Tibial artery (tissue), 4 donors: ENCODE measurements at regions of chr6 and their contacts with region 1.

Region 1: DNA sequence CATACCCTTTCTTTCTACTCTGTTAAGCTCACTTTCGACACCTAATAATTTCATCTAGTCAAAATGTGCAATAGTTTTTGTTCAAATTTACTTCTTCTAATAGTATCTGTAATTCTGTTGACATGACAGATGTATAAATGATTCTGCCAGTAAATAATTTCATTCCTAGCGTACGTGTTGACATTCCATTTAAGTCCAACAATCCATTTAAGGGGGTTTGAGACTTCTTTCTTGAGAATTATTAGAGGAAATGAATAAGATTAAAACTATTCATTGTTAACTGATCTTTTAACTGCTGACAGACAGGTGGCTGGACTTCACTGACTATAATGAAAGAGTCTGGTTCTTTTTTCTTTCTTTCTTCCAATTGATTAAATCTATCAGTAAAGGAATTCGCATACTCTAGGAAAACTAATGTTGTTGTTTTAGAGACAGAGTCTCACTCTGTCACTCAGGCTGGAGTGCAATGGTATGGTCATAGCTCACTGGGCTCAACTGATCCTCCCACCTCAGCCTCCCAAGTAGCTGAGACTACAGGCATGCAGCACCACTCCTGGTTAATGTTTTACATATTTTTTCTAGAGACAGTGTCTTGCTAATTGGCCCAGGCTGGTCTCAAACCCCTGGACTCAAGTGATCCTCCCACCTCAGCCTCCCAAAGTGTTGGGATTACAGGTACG is 55.9 kb downstream of the MAP3K5 start:
- DNase-seq: no peak
- H3K4me3 ChIP-seq: no peak overlapping the region
- H3K27ac ChIP-seq: peak overlapping the region; percentile 55 to 75
- H3K4me1 ChIP-seq: peaks cover 0 to 71% (median 36%) of the 10 kb centered on the region in 4 donors
- H3K27me3 ChIP-seq: no peaks in the 10 kb centered on the region
- CTCF ChIP-seq: no peak

Region 2: DNA sequence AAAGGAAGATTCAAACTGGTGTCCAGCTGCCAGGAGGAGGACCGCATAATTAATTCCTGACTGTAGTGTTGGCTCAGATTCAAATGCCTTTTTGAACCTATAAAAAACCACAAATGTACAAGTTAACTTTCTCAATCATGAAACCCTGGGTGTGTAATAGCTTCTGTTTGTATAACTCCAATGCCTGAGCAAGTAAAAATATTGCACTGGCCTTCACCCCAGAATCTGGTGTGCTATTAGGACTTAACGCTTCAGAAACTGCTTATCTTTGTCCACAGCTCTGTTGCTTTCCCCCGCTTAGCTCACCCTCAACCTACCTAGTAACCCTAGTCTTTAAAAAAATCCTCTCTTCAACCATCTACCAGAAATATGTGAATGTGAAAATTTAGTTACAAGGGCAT is 67.1 kb before region 1 on chr6:
- intact Hi-C with region 1: no loop called
- DNase-seq: no peak
- H3K4me3 ChIP-seq: no peak overlapping the region
- H3K27ac ChIP-seq: no peak overlapping the region
- H3K4me1 ChIP-seq: peaks cover 0 to 10% (median 7%) of the 10 kb centered on the region in 4 donors
- H3K27me3 ChIP-seq: no peaks in the 10 kb centered on the region
- CTCF ChIP-seq: no peak

Region 3: DNA sequence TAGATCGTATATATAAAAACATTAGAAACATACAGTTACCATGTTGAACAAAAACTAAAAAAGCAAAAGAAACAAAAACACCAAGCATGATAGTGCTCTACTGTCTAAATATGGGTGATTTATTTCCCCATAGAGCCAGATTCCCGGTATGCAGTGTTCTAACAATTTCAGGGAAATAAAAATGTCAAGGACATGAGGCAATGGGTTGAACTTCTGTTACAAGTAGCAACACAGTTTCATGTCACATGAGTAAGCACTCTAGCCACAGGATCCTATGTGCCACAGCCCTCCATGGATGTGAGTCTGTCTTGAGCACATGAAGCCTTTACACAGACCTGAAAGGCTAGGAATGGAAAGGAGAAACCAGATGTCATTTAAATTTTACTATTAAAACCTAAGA is 40.2 kb before region 1 on chr6:
- intact Hi-C with region 1: no loop called
- DNase-seq: peak in 1 of 2 donors; percentile 40
- H3K4me3 ChIP-seq: no peak overlapping the region
- H3K27ac ChIP-seq: peak overlapping the region; percentile 6 to 53
- H3K4me1 ChIP-seq: peaks cover 0 to 35% (median 2%) of the 10 kb centered on the region in 4 donors
- H3K27me3 ChIP-seq: no peaks in the 10 kb centered on the region
- CTCF ChIP-seq: no peak

Region 4: GRCh38 chr6:136716917-136717715 is 19.3 kb before region 1 on chr6:
- intact Hi-C with region 1: loop called (anchors 1 kb)
- DNase-seq: no peak
- H3K4me3 ChIP-seq: peak overlapping the region; percentile 3 to 10
- H3K27ac ChIP-seq: peak overlapping the region; percentile 49 to 52
- H3K4me1 ChIP-seq: peaks cover 0 to 48% (median 2%) of the 10 kb centered on the region in 4 donors
- H3K27me3 ChIP-seq: no peaks in the 10 kb centered on the region
- CTCF ChIP-seq: no peak

Region 5: DNA sequence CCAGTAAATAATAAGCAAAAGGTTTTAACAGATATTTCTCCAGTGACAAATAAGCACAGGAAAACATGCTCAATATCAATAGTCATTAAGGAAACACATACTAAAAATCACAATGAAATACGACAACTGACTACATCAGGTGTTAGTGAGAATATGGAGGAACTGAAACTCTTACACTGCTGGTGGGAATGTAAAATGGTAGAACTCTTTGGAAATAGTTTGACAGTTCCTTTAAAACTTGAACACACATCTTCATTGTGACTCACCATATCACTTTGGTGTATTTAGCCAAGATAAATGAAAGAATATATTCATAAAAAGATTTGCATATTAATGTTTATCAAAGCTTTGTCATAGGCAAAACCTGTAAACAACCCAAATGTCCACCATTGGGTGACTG is 67.2 kb after region 1 on chr6:
- intact Hi-C with region 1: no loop called
- DNase-seq: no peak
- H3K4me3 ChIP-seq: no peak overlapping the region
- H3K27ac ChIP-seq: no peak overlapping the region
- H3K4me1 ChIP-seq: no peaks in the 10 kb centered on the region
- H3K27me3 ChIP-seq: no peaks in the 10 kb centered on the region
- CTCF ChIP-seq: no peak